H1 (cell line): ENCODE measurements at regions of chr19 and their contacts with region 1.

Region 1: GRCh38 chr19:10580979-10581631 is 6.0 kb downstream of the AP1M2 start:
- DNase-seq: peak; percentile 90 to 94
- H3K4me3 ChIP-seq: no peak overlapping the region
- H3K27ac ChIP-seq: no peak overlapping the region
- H3K4me1 ChIP-seq: no peaks in the 10 kb centered on the region; a peak in 1 of 7 replicates
- H3K27me3 ChIP-seq: no peaks in the 10 kb centered on the region
- CTCF ChIP-seq: peak; percentile 84 to 100 (median 97)
- EP300 ChIP-seq: no peak
- POLR2A ChIP-seq: no peak
- RAD21 ChIP-seq: peak; percentile 96 to 97

Region 2: GRCh38 chr19:10551698-10552301 is 29.3 kb before region 1 on chr19:
- CTCF ChIA-PET with region 1: interaction called, 14 read pairs
- POLR2A ChIA-PET with region 1: no interaction called
- DNase-seq: no peak
- H3K4me3 ChIP-seq: no peak overlapping the region
- H3K27ac ChIP-seq: no peak overlapping the region
- H3K4me1 ChIP-seq: no peaks in the 10 kb centered on the region
- H3K27me3 ChIP-seq: no peaks in the 10 kb centered on the region
- CTCF ChIP-seq: peak; percentile 45 to 58 (median 51)
- EP300 ChIP-seq: no peak
- POLR2A ChIP-seq: no peak
- RAD21 ChIP-seq: peak; percentile 52 to 64

Region 3: DNA sequence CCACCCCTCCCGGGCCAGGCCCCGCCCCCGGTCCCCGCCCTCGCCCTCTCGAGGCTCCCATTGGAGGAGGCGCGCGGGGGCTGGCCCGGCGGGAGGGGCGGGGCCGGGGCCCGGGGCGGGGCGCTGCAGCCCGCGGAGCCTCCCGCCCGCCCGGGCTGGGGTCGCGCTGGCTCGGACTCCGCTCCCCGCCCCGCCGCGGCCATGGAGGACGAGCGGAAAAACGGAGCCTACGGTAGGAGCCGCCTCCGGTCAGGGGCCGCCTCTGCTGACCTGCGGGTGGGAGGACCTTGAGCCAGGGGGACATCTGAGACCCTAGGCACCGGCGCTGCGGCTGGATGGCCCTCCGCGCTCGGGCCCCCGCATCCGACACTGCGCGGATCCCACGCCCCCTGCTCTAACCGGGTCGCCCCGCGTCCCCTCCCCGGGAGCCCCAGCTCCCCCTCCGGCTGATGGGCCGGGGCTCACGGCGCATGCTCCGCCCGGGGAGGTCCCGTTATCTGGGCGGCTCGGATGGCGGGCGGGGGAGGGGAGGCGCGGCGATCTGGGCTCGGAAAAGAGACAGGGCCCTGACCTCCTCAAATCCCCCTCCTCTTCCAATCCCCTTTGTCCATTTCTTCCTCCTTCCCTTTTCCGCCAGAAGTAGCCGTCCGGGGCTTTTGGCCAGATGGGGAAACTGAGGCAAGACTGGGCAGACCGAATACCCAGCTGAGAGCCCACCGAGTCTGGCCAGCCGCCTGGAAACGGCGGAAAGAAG is 21.4 kb after region 1 on chr19:
- CTCF ChIA-PET with region 1: interaction called, 46 read pairs
- POLR2A ChIA-PET with region 1: interaction called, 6 read pairs
- DNase-seq: peak in 1 of 2 experiments; percentile 89
- H3K4me3 ChIP-seq: peak overlapping the region; percentile 79 to 98 (median 88)
- H3K27ac ChIP-seq: 0 out of 2 replicates have a peak overlapping the region, but pooled peaks have one; percentile 67
- H3K4me1 ChIP-seq: peaks cover 0 to 11% (median 7%) of the 10 kb centered on the region in 4 experiments; a peak in 6 of 7 replicates
- H3K27me3 ChIP-seq: no peaks in the 10 kb centered on the region
- CTCF ChIP-seq: no peak
- EP300 ChIP-seq: no peak
- POLR2A ChIP-seq: peak in 1 of 2 experiments; percentile 59; a peak in 2 of 3 replicates
- RAD21 ChIP-seq: no peak

Region 4: GRCh38 chr19:10636304-10636972 is 55.3 kb after region 1 on chr19:
- CTCF ChIA-PET with region 1: interaction called, 267 read pairs
- POLR2A ChIA-PET with region 1: interaction called, 27 read pairs
- DNase-seq: peak in 1 of 2 experiments; percentile 57
- H3K4me3 ChIP-seq: no peak overlapping the region
- H3K27ac ChIP-seq: no peak overlapping the region
- H3K4me1 ChIP-seq: no peaks in the 10 kb centered on the region; a peak in 1 of 7 replicates
- H3K27me3 ChIP-seq: no peaks in the 10 kb centered on the region
- CTCF ChIP-seq: no peak
- EP300 ChIP-seq: no peak
- POLR2A ChIP-seq: no peak
- RAD21 ChIP-seq: no peak

Region 5: GRCh38 chr19:10662384-10663251 is 81.5 kb after region 1 on chr19:
- CTCF ChIA-PET with region 1: interaction called, 27 read pairs
- POLR2A ChIA-PET with region 1: interaction called, 22 read pairs
- DNase-seq: no peak
- H3K4me3 ChIP-seq: no peak overlapping the region
- H3K27ac ChIP-seq: no peak overlapping the region
- H3K4me1 ChIP-seq: peaks cover 0 to 9% (median 3%) of the 10 kb centered on the region in 4 experiments; a peak in 5 of 7 replicates
- H3K27me3 ChIP-seq: no peaks in the 10 kb centered on the region
- CTCF ChIP-seq: no peak
- EP300 ChIP-seq: no peak
- POLR2A ChIP-seq: peak in 1 of 2 experiments; percentile 25
- RAD21 ChIP-seq: no peak

Region 6: GRCh38 chr19:10695401-10696398 is 114.6 kb after region 1 on chr19:
- CTCF ChIA-PET with region 1: interaction called, 64 read pairs
- POLR2A ChIA-PET with region 1: interaction called, 7 read pairs
- DNase-seq: peak; percentile 94 to 96
- H3K4me3 ChIP-seq: peak overlapping the region in 3 of 4 experiments; percentile 19 to 49 (median 34); a peak in 6 of 8 replicates
- H3K27ac ChIP-seq: no peak overlapping the region
- H3K4me1 ChIP-seq: peaks cover 0 to 6% (median 1%) of the 10 kb centered on the region in 4 experiments; a peak in 4 of 7 replicates
- H3K27me3 ChIP-seq: no peaks in the 10 kb centered on the region
- CTCF ChIP-seq: 0 out of 4 replicates have a peak, but pooled peaks of 1 of the 3 experiments have one; percentile 4
- EP300 ChIP-seq: peak in 1 of 2 experiments; percentile 18; a peak in 1 of 3 replicates
- POLR2A ChIP-seq: peak in 1 of 2 experiments; percentile 35; a peak in 1 of 3 replicates
- RAD21 ChIP-seq: no peak